WTC11 (cell line): ENCODE measurements at regions of chr16 and their contacts with region 1.

Region 1: DNA sequence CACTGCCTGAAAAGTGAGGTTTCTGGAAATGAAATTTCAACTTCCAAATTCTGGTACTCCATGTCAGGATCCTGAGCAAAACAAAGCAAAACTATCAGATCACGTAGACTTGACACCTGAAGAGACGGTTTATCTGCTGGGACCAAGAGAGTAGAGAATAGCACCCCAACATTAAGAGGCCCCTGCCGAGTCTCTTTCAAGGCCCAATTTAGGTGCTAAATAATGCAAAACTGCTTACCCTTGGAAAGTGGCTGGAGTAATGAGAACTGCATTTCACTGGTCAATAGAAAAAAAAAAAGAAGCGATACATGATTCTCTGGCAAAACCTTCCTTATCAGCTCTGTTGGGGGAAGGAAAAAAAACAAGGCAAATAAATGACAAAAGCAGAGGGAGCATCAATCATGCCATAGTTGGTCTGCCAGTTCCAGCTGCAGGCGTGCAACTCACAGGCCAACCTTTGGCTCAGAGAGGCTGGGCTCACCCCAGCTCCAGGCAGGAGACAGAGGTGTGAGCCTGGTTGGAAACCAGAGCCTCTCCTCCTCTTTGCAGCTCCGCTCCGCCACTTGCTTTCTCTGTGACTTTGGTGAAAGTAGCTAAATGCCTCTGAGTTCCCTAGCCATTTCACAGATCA is 595.2 kb downstream of the TOX3 start:
- DNase-seq: peak; percentile 46
- ATAC-seq: peak; percentile 90
- H3K4me3 Mint-ChIP-seq: no peak overlapping the region
- H3K27ac Mint-ChIP-seq: peak overlapping the region; percentile 93
- H3K4me1 Mint-ChIP-seq: peaks cover 67% of the 10 kb centered on the region
- H3K27me3 Mint-ChIP-seq: no peaks in the 10 kb centered on the region
- CTCF ChIP-seq: no peak

Region 2: DNA sequence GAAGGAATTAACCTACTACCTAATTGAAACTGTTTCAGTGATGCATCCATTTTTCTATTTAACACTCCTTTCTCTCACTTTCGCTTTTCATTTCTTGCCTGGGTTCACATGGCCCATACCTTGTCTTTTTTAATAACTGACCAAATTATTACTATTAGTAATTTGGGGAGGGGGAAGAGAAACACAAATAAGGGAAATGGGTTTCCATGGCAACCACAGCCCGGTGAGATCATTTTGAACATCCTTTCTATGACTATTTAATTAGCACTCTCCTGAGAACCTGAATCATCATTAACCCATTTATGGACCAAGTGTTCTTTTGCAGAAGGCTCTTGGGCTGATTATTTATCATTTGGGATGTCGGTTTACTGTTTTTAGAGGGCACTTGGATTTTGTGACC is 172.5 kb before region 1 on chr16:
- CTCF ChIA-PET with region 1: no interaction called
- POLR2A ChIA-PET with region 1: no interaction called
- DNase-seq: no peak
- ATAC-seq: no peak
- H3K4me3 Mint-ChIP-seq: no peak overlapping the region
- H3K27ac Mint-ChIP-seq: no peak overlapping the region
- H3K4me1 Mint-ChIP-seq: no peaks in the 10 kb centered on the region
- H3K27me3 Mint-ChIP-seq: peaks cover under 1% of the 10 kb centered on the region; the same call in 1 of the 2 replicates
- CTCF ChIP-seq: no peak

Region 3: GRCh38 chr16:51939378-51939871 is 12.4 kb before region 1 on chr16:
- CTCF ChIA-PET with region 1: interaction called, 11 read pairs
- POLR2A ChIA-PET with region 1: interaction called, 3 read pairs
- DNase-seq: no peak
- ATAC-seq: peak; percentile 56
- H3K4me3 Mint-ChIP-seq: no peak overlapping the region
- H3K27ac Mint-ChIP-seq: no peak overlapping the region
- H3K4me1 Mint-ChIP-seq: peaks cover 31% of the 10 kb centered on the region
- H3K27me3 Mint-ChIP-seq: no peaks in the 10 kb centered on the region
- CTCF ChIP-seq: no peak